PC-3 (cell line): ENCODE measurements at regions of chr1 and their contacts with region 1.

Region 1: DNA sequence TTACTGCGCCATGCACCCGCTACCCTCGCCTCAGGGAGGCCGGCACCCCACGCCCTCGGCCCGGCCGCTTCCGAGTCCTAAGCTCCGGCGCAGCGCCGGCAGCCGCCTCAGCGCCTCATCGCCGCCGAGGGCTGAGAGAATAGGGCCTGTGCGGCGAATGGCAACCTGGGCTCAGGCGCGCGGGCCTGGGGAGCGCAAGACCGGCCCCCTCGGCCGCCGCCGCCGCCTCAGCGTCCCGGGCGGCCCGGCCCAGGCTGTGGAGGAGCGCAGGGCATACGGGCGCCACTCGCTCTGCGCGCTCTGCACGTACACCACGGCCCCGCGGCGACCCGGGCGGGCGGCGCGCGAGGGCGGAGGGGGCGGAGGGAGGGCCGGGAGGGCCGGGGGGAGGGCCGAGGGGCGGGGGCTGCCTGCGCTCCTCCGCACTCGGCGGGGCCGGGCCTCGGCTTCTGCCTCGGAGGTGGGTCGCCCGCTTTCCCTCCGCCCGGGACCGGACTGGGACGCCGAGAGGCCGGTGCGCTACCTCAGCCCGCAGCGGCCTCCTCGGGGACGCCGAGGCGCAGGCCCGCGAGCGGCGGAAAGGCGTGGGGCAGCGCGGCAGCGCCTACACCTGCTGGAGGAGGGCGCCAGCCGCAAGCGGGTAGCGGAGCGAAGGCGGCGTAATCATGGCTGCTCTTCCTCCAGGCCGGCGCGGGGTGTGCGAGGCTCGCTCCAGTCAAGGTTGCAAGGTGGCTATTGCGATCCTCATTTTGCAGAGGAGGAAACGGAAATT is at the start of gene EGLN1:
- DNase-seq: peak; percentile 88
- ATAC-seq: peak; percentile 69
- H3K4me3 ChIP-seq: peak within 1 kb of the TSS; percentile 85
- H3K27ac ChIP-seq: peak within 1 kb of the TSS; percentile 77
- H3K4me1 ChIP-seq: peaks cover 43% of the 10 kb centered on the region
- H3K27me3 ChIP-seq: no peaks in the 10 kb centered on the region
- CTCF ChIP-seq: peak; percentile 48
- total RNA-seq, gene EGLN1: 37.0 and 44.9 TPM in 2 replicates

Region 2: GRCh38 chr1:231357831-231358354 is 64.3 kb before region 1 on chr1:
- CTCF ChIA-PET with region 1: no interaction called
- POLR2A ChIA-PET with region 1: interaction called, 4 read pairs
- intact Hi-C with region 1: loop called (anchors 1 kb)
- DNase-seq: peak; percentile 79
- ATAC-seq: peak; percentile 91
- H3K4me3 ChIP-seq: no peak overlapping the region
- H3K27ac ChIP-seq: no peak overlapping the region
- H3K4me1 ChIP-seq: no peaks in the 10 kb centered on the region
- H3K27me3 ChIP-seq: no peaks in the 10 kb centered on the region
- CTCF ChIP-seq: peak; percentile 96

Region 3: DNA sequence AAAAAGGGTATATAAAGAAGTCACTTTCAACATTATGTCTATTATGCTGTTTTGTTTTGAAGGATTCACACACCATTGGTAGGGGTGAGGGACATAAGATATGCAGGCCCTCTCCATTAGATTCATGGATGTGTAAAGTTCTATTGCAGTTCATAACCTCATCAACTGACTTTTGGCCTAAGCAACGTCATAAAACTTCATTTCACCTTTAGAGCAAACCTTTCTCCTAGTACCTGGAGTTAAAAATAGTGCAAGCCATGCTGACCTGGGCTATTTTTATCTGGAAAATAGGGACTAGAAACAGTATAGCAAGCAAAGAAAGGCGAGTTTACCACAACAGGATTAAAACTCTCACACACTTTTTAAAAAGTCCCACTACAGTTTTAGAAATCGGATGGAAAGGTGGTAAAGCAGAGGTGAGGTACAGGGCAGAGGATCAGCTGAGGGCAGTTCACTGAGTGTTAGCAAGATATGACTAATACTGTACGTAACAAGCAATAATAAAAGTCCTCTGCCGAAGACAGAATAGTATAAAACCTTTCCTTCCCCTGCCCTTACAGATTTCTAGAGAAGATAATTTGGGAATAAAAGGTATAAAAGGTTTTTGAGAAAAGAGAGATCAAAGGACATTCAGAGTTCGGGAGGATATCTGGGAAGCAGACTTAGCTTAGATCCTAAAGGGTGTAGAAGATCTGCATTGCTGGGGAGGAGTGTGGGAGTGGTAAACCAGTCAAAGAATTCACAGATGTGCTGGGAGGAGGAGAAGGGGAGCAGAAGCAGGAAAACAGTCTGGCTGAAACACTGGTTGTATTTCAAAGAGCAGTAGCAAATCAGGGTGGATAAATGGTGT is 14.4 kb before region 1 on chr1:
- CTCF ChIA-PET with region 1: no interaction called
- POLR2A ChIA-PET with region 1: no interaction called
- intact Hi-C with region 1: loop called (anchors 1 kb)
- DNase-seq: peak; percentile 65
- ATAC-seq: peak; percentile 99
- H3K4me3 ChIP-seq: peak overlapping the region; percentile 43
- H3K27ac ChIP-seq: peak overlapping the region; percentile 60
- H3K4me1 ChIP-seq: peaks cover 30% of the 10 kb centered on the region
- H3K27me3 ChIP-seq: no peaks in the 10 kb centered on the region
- CTCF ChIP-seq: no peak

Region 4: GRCh38 chr1:231584124-231584523 is 161.9 kb after region 1 on chr1:
- CTCF ChIA-PET with region 1: no interaction called
- POLR2A ChIA-PET with region 1: no interaction called
- intact Hi-C with region 1: loop called (anchors 5 kb)
- DNase-seq: peak; percentile 86
- ATAC-seq: peak; percentile 99
- H3K4me3 ChIP-seq: no peak overlapping the region
- H3K27ac ChIP-seq: peak overlapping the region; percentile 21; the same call in 1 of the 2 replicates
- H3K4me1 ChIP-seq: peaks cover 4% of the 10 kb centered on the region
- H3K27me3 ChIP-seq: no peaks in the 10 kb centered on the region
- CTCF ChIP-seq: peak; percentile 71

Region 5: GRCh38 chr1:231603598-231604275 is 181.6 kb after region 1 on chr1:
- CTCF ChIA-PET with region 1: no interaction called
- POLR2A ChIA-PET with region 1: no interaction called
- intact Hi-C with region 1: loop called (anchors 2 kb)
- DNase-seq: peak; percentile 88
- ATAC-seq: peak; percentile 62
- H3K4me3 ChIP-seq: peak overlapping the region; percentile 72
- H3K27ac ChIP-seq: no peak overlapping the region
- H3K4me1 ChIP-seq: peaks cover 24% of the 10 kb centered on the region
- H3K27me3 ChIP-seq: no peaks in the 10 kb centered on the region
- CTCF ChIP-seq: peak; percentile 93